Heart right ventricle (tissue), 16 donors: ENCODE measurements at regions of chr10 and their contacts with region 1.

Region 1: GRCh38 chr10:26408858-26409494 is 29.2 kb upstream of the APBB1IP start:
- DNase-seq: no peak
- ATAC-seq: no peak
- H3K4me3 ChIP-seq: no peak overlapping the region
- H3K27ac ChIP-seq: no peak overlapping the region
- H3K4me1 ChIP-seq: no peaks in the 10 kb centered on the region
- H3K27me3 ChIP-seq: peaks cover 0 to 10% (median 0%) of the 10 kb centered on the region in 7 donors
- CTCF ChIP-seq: no peak

Region 2: DNA sequence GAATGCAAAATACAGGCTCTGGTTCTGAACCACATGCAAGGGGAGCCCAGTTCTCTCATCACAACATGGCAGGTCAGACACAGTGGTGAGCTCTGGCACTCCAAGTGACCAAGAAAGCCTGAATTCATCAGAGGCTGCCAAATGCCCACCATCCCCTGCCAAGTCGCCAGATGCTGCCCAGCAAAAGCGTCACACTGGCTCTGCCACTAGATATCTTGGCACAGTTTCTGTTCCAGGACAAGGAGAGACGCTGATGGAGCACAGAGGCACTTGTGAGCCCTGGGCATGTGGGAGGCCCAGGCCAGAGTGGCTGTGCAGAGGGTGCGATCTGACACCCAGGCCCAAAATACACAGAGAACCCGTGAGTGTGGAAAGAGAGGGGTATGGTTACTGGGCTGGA is 134.6 kb before region 1 on chr10:
- intact Hi-C with region 1: no loop called
- DNase-seq: peak in 1 of 2 donors; percentile 13
- ATAC-seq: peak in 5 of 8 donors; percentile 20 to 64 (median 47)
- H3K4me3 ChIP-seq: no peak overlapping the region
- H3K27ac ChIP-seq: no peak overlapping the region
- H3K4me1 ChIP-seq: no peaks in the 10 kb centered on the region
- H3K27me3 ChIP-seq: peaks cover 0 to 12% (median 0%) of the 10 kb centered on the region in 7 donors
- CTCF ChIP-seq: no peak

Region 3: DNA sequence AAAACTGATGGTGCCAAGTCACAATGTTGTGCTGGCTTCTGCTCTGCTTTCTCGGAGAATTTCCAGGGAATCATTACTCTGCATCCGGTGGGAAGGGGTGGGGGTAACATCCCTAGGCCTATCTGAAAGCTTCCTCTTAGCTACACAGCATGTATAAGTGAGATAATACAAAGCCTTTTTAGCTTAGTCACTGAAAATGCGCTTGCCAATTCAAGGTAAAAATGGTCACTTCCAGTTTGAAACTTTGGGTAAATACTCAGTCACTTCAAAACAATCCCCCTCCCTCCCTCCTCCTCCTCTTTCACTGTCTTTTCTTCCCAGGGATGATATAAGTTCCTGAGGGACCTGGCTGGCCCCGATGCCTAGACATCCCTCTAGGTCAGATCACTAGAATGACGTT is 28.2 kb before region 1 on chr10:
- intact Hi-C with region 1: loop called in 1 of 10 experiments (anchors 1 kb)
- DNase-seq: no peak
- ATAC-seq: no peak
- H3K4me3 ChIP-seq: no peak overlapping the region
- H3K27ac ChIP-seq: no peak overlapping the region
- H3K4me1 ChIP-seq: peaks cover 0 to 14% (median 0%) of the 10 kb centered on the region in 9 donors
- H3K27me3 ChIP-seq: peaks cover 0 to 6% (median 0%) of the 10 kb centered on the region in 7 donors
- CTCF ChIP-seq: no peak